PC-9 (cell line): ENCODE measurements at regions of chr2 and their contacts with region 1.

Region 1: DNA sequence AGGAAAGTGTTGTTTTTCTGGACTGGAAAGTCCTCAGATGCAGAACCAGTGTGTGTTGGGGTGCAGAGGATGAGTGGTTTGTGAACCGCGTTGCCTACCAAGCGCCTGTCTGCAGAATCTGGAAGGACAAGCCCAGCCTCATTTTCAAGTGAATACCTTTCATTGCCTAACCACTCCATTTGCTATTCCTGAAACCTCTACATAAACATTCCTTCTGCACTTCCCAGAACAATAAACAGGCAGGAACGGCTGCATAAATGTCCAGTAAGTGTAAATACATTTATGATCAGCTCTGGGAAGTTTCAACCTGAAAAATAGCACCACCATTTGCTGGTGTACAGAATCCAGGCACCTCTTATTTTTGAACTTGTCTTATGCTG is 45.4 kb upstream of the FHL2 start:
- DNase-seq: peak; percentile 52 to 79
- H3K4me3 ChIP-seq: no peak overlapping the region
- H3K27ac ChIP-seq: peak overlapping the region; percentile 50
- H3K4me1 ChIP-seq: peaks cover 75% of the 10 kb centered on the region
- H3K27me3 ChIP-seq: no peaks in the 10 kb centered on the region
- CTCF ChIP-seq: no peak

Region 2: DNA sequence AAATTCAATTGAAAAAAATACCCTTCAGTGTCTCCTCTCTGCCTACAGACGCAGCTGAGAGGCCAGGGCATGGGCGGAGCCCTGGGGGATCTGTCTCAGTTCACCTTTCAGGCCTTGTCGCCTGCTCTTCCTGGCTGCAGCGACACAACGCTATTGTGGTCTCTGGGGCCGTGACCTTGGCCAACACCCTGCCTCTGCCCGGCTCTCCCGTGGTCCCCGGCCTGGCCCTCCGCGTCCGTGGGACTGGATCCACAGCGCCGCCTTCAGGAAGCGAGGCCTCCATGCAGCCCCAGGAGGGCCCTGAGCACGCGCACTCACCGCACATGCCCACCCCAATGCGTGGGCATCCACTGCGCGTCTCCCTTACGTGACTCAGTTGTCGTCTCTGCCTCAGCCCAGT is 325.2 kb before region 1 on chr2:
- CTCF ChIA-PET with region 1: no interaction called
- POLR2A ChIA-PET with region 1: no interaction called
- intact Hi-C with region 1: no loop called
- DNase-seq: no peak
- H3K4me3 ChIP-seq: no peak overlapping the region
- H3K27ac ChIP-seq: no peak overlapping the region
- H3K4me1 ChIP-seq: no peaks in the 10 kb centered on the region
- H3K27me3 ChIP-seq: no peaks in the 10 kb centered on the region
- CTCF ChIP-seq: no peak

Region 3: DNA sequence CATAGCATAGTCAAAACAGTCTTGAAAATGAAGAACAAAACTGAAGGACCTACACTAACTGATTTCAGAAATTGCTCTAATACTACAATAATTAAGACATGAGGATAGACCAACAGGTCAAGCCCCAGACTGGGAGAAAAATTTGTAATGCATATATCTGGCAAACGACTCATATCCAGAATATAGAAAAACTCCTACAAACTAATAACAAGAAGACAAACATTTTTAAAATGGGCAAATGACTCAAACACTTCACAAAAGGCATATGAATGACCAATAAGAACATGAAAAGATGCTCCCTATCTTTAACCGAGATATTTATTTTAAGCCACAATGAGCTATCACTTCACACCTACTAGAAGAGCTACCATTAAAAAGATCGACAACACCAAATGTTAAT is 128.9 kb before region 1 on chr2:
- CTCF ChIA-PET with region 1: no interaction called
- POLR2A ChIA-PET with region 1: no interaction called
- intact Hi-C with region 1: no loop called
- DNase-seq: no peak
- H3K4me3 ChIP-seq: no peak overlapping the region
- H3K27ac ChIP-seq: no peak overlapping the region
- H3K4me1 ChIP-seq: no peaks in the 10 kb centered on the region
- H3K27me3 ChIP-seq: no peaks in the 10 kb centered on the region
- CTCF ChIP-seq: no peak

Region 4: GRCh38 chr2:105403785-105404698 is 40.2 kb before region 1 on chr2:
- CTCF ChIA-PET with region 1: no interaction called
- POLR2A ChIA-PET with region 1: interaction called, 13 read pairs
- intact Hi-C with region 1: no loop called
- DNase-seq: peak; percentile 82 to 98
- H3K4me3 ChIP-seq: peak overlapping the region; percentile 41; the same call in 1 of the 2 replicates
- H3K27ac ChIP-seq: peak overlapping the region; percentile 96
- H3K4me1 ChIP-seq: peaks cover 77% of the 10 kb centered on the region
- H3K27me3 ChIP-seq: no peaks in the 10 kb centered on the region
- CTCF ChIP-seq: peak; percentile 64